PC-9 (cell line): ENCODE measurements at regions of chr3 and their contacts with region 1.

Region 1: GRCh38 chr3:188054541-188054940 is 99.4 kb upstream of the LPP start:
- DNase-seq: no peak
- H3K4me3 ChIP-seq: no peak overlapping the region
- H3K27ac ChIP-seq: no peak overlapping the region
- H3K4me1 ChIP-seq: peaks cover 29% of the 10 kb centered on the region
- H3K27me3 ChIP-seq: no peaks in the 10 kb centered on the region
- CTCF ChIP-seq: no peak

Region 2: DNA sequence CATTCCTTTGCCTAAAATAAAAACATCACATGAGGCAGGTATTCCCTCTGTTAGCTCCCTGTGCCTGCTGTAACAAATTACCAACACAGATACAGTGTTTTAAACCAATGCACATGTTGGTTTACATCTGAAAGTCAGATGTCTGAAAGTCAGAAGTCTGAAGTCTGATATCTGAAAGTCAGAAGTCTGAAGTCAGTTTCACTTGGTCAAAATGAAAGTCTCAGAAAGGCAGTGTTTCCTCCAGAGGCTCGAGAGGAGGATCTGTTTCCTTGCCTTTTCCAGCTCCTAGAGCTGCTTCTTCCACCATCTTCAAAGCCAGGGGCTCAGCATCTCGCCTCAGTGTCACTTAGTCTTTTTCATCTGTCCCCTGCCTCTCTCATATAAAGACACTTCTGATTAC is 406.4 kb before region 1 on chr3:
- CTCF ChIA-PET with region 1: no interaction called
- POLR2A ChIA-PET with region 1: no interaction called
- intact Hi-C with region 1: no loop called
- DNase-seq: no peak
- H3K4me3 ChIP-seq: no peak overlapping the region
- H3K27ac ChIP-seq: no peak overlapping the region
- H3K4me1 ChIP-seq: no peaks in the 10 kb centered on the region
- H3K27me3 ChIP-seq: peaks cover 69% of the 10 kb centered on the region
- CTCF ChIP-seq: no peak

Region 3: DNA sequence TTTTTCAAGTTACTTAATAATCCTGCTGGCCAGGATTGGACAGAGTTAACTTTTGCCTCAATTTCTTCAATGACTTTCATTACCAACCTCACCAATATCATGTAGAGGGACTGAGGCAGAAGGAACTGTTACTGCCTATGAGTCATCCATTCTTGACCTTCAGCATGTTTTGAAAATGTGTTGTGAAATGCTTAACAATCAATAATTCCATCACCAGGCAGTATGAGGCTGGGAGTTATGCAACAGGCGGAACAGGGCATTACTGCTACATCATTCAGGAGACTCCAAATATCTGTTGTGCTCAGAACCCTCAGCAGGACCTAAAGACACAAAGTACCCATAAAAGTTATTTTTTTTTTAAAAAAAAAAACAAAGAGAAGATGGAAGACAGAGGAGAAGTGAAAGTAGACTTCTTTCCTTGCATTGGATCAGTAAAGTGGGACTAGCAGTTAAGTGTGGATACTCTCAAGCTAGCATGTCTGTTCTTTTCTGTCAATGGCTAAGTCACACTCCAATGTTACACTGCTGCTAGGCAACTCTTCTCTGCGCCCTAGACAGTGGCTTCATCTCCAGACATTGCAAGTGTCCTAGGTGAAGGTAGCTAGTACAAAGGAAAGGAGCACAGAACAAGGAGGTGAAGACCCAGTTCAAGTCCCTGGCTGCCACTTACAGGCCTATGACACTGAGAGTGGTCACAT is 85.5 kb before region 1 on chr3:
- CTCF ChIA-PET with region 1: interaction called, 19 read pairs
- POLR2A ChIA-PET with region 1: no interaction called
- intact Hi-C with region 1: no loop called
- DNase-seq: peak in 1 of 2 experiments; percentile 96
- H3K4me3 ChIP-seq: no peak overlapping the region
- H3K27ac ChIP-seq: peak overlapping the region; percentile 62
- H3K4me1 ChIP-seq: peaks cover 71% of the 10 kb centered on the region
- H3K27me3 ChIP-seq: no peaks in the 10 kb centered on the region
- CTCF ChIP-seq: no peak

Region 4: GRCh38 chr3:188507244-188507720 is 452.7 kb after region 1 on chr3:
- CTCF ChIA-PET with region 1: no interaction called
- POLR2A ChIA-PET with region 1: no interaction called
- intact Hi-C with region 1: no loop called
- DNase-seq: no peak
- H3K4me3 ChIP-seq: no peak overlapping the region
- H3K27ac ChIP-seq: no peak overlapping the region
- H3K4me1 ChIP-seq: no peaks in the 10 kb centered on the region
- H3K27me3 ChIP-seq: no peaks in the 10 kb centered on the region
- CTCF ChIP-seq: no peak